ENCODE measurements at regions of chr5 and their contacts with region 1.

Region 1: DNA sequence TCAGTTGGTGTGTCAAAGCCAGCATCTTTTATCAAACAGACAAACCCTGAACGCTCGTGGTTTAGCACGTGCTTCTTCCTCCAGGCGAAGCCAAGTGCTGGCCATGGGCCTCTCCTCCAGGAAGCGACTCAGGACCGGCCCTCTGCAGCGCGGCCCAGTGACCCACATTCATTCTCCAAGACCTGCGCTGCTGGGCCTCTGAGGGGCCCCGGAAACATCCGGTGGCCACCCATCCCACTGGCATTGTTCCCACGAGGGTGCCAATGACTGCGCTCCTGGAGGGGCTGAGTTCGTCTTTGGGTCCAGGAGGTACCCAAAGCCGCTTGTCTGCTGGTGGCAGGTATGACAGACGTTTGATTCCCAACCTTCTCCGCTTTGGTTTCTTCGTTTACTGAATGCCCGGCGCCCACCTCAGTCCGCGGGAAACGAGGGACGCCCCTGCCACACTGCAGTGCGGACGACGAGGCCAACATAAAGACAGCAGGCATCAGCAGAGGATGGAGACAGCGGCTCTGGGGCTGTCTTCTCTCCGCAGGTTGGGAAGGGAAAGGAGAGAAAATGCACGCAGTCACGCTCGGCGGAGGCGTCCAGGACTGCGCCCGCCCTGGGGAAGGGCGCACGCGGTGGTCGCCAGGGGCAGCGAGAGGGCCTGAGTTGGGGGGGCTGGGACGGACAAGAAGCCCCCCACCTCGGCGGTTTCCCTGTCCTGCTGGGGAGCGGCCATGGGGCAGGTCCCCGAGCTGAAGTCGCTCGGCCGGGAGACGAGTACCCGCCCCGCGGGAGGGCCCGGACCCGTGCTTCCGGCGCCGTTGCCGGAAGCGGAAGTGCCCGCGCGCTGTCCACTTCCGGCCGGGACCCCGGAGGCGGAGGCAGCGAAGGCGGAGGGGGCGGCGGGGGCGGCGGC is at the start of gene EXOC3:
- DNase-seq: peak; percentile 82 to 92
- ATAC-seq: peak; percentile 92
- H3K4me3 ChIP-seq: peak within 1 kb of the TSS; percentile 59 to 71
- H3K27ac ChIP-seq: peak within 1 kb of the TSS in 1 of 2 donors; percentile 19
- H3K4me1 ChIP-seq: no peaks in the 10 kb centered on the region
- H3K27me3 ChIP-seq: no peaks in the 10 kb centered on the region
- total RNA-seq, gene EXOC3: 54.6 to 65.2 TPM

Region 2: GRCh38 chr5:264346-264745 is 178.2 kb before region 1 on chr5:
- intact Hi-C with region 1: no loop called
- DNase-seq: no peak
- ATAC-seq: no peak
- H3K4me3 ChIP-seq: no peak overlapping the region
- H3K27ac ChIP-seq: no peak overlapping the region
- H3K4me1 ChIP-seq: no peaks in the 10 kb centered on the region
- H3K27me3 ChIP-seq: no peaks in the 10 kb centered on the region

Region 3: DNA sequence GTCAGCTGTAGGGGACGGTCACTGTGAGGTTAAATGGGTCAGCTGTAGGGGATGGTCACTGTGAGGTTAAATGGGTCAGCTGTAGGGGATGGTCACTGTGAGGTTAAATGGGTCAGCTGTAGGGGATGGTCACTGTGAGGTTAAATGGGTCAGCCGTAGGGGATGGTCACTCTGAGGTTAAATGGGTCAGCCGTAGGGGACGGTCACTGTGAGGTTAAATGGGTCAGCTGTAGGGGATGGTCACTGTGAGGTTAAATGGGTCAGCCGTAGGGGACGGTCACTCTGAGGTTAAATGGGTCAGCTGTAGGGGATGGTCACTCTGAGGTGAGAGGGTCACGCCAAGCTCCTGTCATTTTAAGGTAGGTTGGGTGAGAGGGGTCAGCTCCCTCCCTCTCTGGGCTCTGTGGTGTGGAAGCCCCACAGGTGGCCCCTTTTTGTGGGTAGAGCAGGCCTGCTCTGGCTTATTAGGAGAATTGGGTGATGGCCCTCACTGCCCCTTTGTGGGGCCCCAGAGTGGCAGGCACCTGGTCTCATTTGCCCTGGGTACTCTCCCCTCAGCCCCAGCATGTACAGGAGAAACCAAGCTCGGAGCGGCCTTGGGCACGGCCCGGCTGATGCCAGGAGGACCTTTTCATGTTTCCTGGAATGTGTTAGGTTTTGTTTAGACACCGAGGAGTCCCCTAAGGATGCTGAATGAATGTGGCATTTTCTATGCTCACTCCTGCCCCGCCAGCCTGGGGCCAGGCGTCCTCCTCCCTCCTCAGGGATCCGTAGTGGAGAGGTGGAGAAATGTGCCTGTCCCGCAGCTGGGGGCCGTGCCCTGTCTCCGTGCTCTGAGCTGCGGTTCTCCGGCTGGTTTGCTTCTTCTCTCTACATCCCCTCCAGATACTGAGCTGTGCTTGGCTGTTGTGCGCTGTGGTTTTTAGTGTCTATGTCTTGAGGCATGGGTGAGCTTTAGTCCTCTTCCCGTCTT is 89.7 kb before region 1 on chr5:
- intact Hi-C with region 1: no loop called
- DNase-seq: no peak
- ATAC-seq: peak; percentile 26
- H3K4me3 ChIP-seq: no peak overlapping the region
- H3K27ac ChIP-seq: no peak overlapping the region
- H3K4me1 ChIP-seq: no peaks in the 10 kb centered on the region
- H3K27me3 ChIP-seq: no peaks in the 10 kb centered on the region

Region 4: GRCh38 chr5:458547-459353 is 16.2 kb after region 1 on chr5:
- intact Hi-C with region 1: no loop called
- DNase-seq: peak; percentile 41 to 70
- ATAC-seq: no peak
- H3K4me3 ChIP-seq: no peak overlapping the region
- H3K27ac ChIP-seq: no peak overlapping the region
- H3K4me1 ChIP-seq: no peaks in the 10 kb centered on the region
- H3K27me3 ChIP-seq: no peaks in the 10 kb centered on the region

Region 5: DNA sequence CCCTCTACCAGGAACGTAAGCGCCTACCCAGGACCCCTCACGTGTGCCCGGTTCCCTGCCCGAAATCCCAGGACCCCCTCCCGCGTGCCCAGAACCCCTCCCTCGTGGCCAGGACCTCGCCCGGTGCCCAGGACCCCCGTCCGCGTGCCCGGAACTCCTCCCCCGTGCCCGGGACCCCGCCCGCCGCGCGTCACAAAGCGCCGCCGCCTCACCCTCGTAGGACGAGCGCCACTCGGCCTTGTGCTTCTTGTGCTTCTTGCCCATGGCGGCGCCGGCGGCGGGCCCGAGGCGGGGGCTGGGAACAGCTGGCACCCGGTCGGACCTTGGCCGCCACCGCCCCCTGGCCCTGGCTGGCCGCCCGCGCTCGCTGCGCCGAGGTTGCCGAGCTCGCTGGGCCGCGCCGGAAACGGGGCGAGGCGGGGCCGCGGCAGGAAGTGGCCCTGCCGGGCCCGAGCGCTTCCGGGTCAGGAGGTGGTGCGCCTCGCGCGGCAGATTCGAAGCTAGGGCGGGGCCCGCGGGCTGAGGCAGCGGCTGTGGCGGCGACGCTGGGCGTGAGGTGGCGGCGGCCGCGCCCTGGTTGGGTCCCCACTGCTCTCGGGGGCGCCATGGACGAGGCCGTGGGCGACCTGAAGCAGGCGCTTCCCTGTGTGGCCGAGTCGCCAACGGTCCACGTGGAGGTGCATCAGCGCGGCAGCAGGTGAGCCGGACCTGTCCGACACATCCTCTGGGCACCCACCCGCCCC is 450.0 kb after region 1 on chr5 and contains the starts of genes BRD9 and TRIP13:
- intact Hi-C with region 1: loop called in 1 of 2 experiments (anchors 10 kb)
- DNase-seq: peak; percentile 89 to 95
- ATAC-seq: peak; percentile 94
- H3K4me3 ChIP-seq: peak within 1 kb of the TSS; percentile 55 to 63
- H3K27ac ChIP-seq: peak within 1 kb of the TSS; percentile 41 to 43
- H3K4me1 ChIP-seq: no peaks in the 10 kb centered on the region
- H3K27me3 ChIP-seq: no peaks in the 10 kb centered on the region
- total RNA-seq, gene BRD9: 38.2 to 39.7 TPM
- total RNA-seq, gene TRIP13: 0.84 to 1.3 TPM